CD14-positive monocyte (primary cell): ENCODE measurements at regions of chr10 and their contacts with region 1.

Region 1: GRCh38 chr10:104231784-104232612 is at the start of gene CFAP43:
- DNase-seq: peak; percentile 96 to 97 (median 96)
- H3K4me3 ChIP-seq: peak within 1 kb of the TSS; percentile 51 to 77 (median 57)
- H3K4me3 Mint-ChIP-seq: peak within 1 kb of the TSS; percentile 80 to 89
- H3K27ac ChIP-seq: peak within 1 kb of the TSS in 1 of 2 donors; percentile 33
- H3K27ac Mint-ChIP-seq: peak within 1 kb of the TSS in 5 of 7 donors; percentile 78 to 91 (median 88)
- H3K4me1 ChIP-seq: peaks cover 11 to 12% of the 10 kb centered on the region in 2 donors
- H3K4me1 Mint-ChIP-seq: peaks cover 7% of the 10 kb centered on the region
- H3K27me3 ChIP-seq: peaks cover 8 to 19% of the 10 kb centered on the region in 2 donors
- H3K27me3 Mint-ChIP-seq: peaks cover 12 to 23% (median 23%) of the 10 kb centered on the region in 3 donors
- CTCF ChIP-seq: no peak
- polyA plus RNA-seq, gene CFAP43: 0.06 TPM in 1 of 3 donors, not detected in the others

Region 2: DNA sequence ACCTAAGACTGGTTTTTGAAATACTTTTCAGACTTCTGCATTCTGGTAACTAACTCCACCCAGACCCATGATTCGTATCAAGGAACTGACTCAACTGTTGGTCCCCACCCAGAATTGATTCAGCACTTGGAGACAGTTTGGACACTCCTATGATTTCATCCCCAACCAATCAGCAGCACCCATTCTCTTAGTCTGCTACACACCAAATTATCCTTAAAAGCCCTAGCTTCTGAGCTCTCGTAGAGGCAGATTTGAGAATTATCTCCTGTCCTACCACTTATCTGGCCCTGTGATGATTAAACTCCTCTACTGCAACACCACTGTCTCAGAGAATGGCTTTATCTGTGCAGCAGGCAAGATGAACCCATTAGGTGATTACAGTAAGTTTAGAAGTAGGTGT is 15.0 kb after region 1 on chr10:
- intact Hi-C with region 1: loop called in 1 of 2 experiments (anchors 2 kb)
- DNase-seq: peak; percentile 96 to 99 (median 99)
- H3K4me3 ChIP-seq: peak overlapping the region; percentile 15 to 57 (median 45)
- H3K4me3 Mint-ChIP-seq: peak overlapping the region; percentile 61 to 69
- H3K27ac ChIP-seq: peak overlapping the region; percentile 94 to 98
- H3K27ac Mint-ChIP-seq: peak overlapping the region; percentile 97 to 99 (median 98)
- H3K4me1 ChIP-seq: peaks cover 23 to 26% of the 10 kb centered on the region in 2 donors
- H3K4me1 Mint-ChIP-seq: peaks cover 38% of the 10 kb centered on the region
- H3K27me3 ChIP-seq: no peaks in the 10 kb centered on the region
- H3K27me3 Mint-ChIP-seq: peaks cover 0 to 3% (median 0%) of the 10 kb centered on the region in 3 donors
- CTCF ChIP-seq: no peak

Region 3: DNA sequence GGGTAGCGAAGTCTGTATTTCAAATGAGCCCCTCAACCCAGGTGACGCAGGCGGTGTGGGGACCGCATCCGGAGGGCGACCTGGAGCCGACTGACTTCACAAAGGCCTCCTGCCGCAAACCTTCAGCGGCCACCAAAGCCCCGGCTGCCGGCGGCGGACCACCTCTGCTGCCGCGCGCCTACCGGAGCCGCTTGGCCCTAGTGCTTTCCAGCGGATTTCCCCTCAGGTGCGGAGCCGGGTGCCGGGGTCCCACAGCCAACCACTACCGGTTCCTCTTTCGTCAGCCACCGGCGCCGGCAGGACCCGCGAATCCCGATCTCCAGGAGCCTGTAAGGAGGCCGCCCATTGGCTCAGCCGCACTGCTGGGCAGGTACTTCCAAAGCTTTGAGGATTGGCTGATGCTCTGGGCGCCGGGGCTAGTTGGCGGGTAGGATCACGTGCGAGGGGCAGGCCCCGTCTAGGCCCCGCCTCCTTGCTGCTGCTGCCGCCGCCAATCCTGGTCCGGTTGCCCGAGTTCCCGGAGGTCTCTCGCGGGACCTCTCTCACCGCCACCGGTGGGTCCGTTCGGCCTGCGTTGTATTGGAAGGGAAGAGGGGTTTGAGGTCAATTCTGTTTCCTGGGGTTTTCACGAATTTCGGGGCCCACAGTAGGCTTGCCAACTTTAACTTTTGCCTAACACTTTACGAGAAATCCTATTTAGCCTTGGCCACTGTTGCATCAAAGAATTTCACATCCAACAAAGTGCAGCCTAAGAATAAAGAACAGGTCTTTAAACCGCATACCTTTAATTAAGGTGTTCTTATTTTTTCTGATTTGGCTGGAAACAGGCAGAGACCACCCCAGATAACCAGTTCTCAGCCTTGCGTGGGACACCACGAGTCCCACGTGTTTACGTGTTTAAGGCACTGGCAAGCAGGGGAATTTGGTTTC is 37.0 kb after region 1 on chr10 and contains the start of gene GSTO2:
- intact Hi-C with region 1: loop called (anchors 5 kb)
- DNase-seq: peak; percentile 97 to 99 (median 99)
- H3K4me3 ChIP-seq: peak within 1 kb of the TSS; percentile 72 to 84 (median 80)
- H3K4me3 Mint-ChIP-seq: peak within 1 kb of the TSS; percentile 83 to 89
- H3K27ac ChIP-seq: peak within 1 kb of the TSS; percentile 80 to 94
- H3K27ac Mint-ChIP-seq: peak within 1 kb of the TSS; percentile 90 to 97 (median 93)
- H3K4me1 ChIP-seq: peaks cover 14 to 22% of the 10 kb centered on the region in 2 donors
- H3K4me1 Mint-ChIP-seq: peaks cover 23% of the 10 kb centered on the region
- H3K27me3 ChIP-seq: no peaks in the 10 kb centered on the region
- H3K27me3 Mint-ChIP-seq: peaks cover under 1% of the 10 kb centered on the region in 3 donors
- CTCF ChIP-seq: no peak
- polyA plus RNA-seq, gene GSTO2: 0.16 to 0.26 TPM in 2 of 3 donors, not detected in the other

Region 4: DNA sequence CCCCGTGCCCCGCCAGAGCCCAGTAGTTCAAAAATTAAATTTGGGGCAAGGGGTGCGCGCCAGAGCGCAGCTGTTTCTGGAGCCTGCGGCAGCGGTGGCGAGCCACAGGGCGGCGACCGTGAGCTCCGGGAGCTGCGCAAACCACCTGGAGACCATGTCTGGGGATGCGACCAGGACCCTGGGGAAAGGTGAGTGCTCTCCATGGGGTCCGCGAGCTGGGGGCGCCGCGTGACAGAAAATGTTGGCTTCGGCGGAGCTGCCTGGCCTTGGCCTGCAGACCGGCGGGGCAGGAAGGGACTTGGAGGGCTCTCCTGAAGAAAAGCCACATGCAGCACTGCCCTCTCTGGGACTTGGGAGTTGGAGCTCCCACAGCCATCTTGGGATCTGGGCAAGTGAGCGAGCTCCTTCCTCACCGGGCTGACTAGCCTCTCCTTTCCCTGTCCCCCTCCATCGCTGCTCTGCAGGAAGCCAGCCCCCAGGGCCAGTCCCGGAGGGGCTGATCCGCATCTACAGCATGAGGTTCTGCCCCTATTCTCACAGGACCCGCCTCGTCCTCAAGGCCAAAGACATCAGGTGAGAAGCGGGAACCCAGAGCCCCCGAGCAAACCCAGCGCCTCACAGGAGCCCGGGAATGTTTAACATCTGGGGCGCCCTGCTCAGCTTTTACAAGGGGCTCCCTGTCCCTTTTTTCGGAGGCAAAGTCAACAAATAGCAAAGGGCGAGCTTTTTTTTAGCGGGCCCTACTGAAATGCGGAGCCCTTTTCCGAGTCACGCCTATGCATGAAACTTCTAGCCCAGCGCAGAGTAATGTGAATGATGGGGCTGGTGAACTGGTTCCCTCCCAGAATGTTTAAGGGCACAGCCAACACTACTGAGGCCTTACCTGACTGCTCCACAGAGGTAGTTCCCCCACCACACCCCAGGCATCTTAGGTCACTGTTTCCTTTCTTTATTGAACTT is 43.0 kb after region 1 on chr10:
- intact Hi-C with region 1: loop called in 1 of 2 experiments (anchors 5 kb)
- DNase-seq: peak in 2 of 3 donors; percentile 30 to 45
- H3K4me3 ChIP-seq: no peak overlapping the region
- H3K4me3 Mint-ChIP-seq: peak overlapping the region in 1 of 2 donors; percentile 56
- H3K27ac ChIP-seq: no peak overlapping the region
- H3K27ac Mint-ChIP-seq: peak overlapping the region in 1 of 7 donors; percentile 61
- H3K4me1 ChIP-seq: peaks cover 7% of the 10 kb centered on the region in 2 donors
- H3K4me1 Mint-ChIP-seq: peaks cover 16% of the 10 kb centered on the region
- H3K27me3 ChIP-seq: peaks cover 0 to 13% of the 10 kb centered on the region in 2 donors
- H3K27me3 Mint-ChIP-seq: peaks cover 13 to 21% (median 17%) of the 10 kb centered on the region in 3 donors
- CTCF ChIP-seq: peak; percentile 95

Region 5: GRCh38 chr10:104353325-104354048 is 121.5 kb after region 1 on chr10 and contains the start of gene CFAP58:
- intact Hi-C with region 1: loop called in 1 of 2 experiments (anchors 10 kb)
- DNase-seq: peak; percentile 81 to 88 (median 83)
- H3K4me3 ChIP-seq: peak within 1 kb of the TSS; percentile 18 to 72 (median 36)
- H3K4me3 Mint-ChIP-seq: no peak within 1 kb of the TSS
- H3K27ac ChIP-seq: peak within 1 kb of the TSS; percentile 31 to 52
- H3K27ac Mint-ChIP-seq: no peak within 1 kb of the TSS
- H3K4me1 ChIP-seq: peaks cover 68 to 72% of the 10 kb centered on the region in 2 donors
- H3K4me1 Mint-ChIP-seq: no peaks in the 10 kb centered on the region
- H3K27me3 ChIP-seq: no peaks in the 10 kb centered on the region
- H3K27me3 Mint-ChIP-seq: peaks cover 0 to 1% (median 0%) of the 10 kb centered on the region in 3 donors
- CTCF ChIP-seq: peak; percentile 83
- polyA plus RNA-seq, gene CFAP58: 0.16 TPM in 1 of 3 donors, not detected in the others

Region 6: GRCh38 chr10:104417637-104418296 is 185.8 kb after region 1 on chr10:
- intact Hi-C with region 1: no loop called
- DNase-seq: peak; percentile 52 to 70 (median 54)
- H3K4me3 ChIP-seq: peak overlapping the region in 1 of 3 experiments; percentile 16
- H3K4me3 Mint-ChIP-seq: peak overlapping the region in 1 of 2 donors; percentile 14
- H3K27ac ChIP-seq: peak overlapping the region in 1 of 2 donors; percentile 39
- H3K27ac Mint-ChIP-seq: peak overlapping the region in 6 of 7 donors; percentile 68 to 88 (median 82)
- H3K4me1 ChIP-seq: peaks cover 32 to 33% of the 10 kb centered on the region in 2 donors
- H3K4me1 Mint-ChIP-seq: peaks cover 39% of the 10 kb centered on the region
- H3K27me3 ChIP-seq: no peaks in the 10 kb centered on the region
- H3K27me3 Mint-ChIP-seq: peaks cover 1 to 2% (median 2%) of the 10 kb centered on the region in 3 donors
- CTCF ChIP-seq: no peak